Activated naive CD4-positive, alpha-beta T cell treated with anti-CD3 and anti-CD28 coated beads for 36 hours (primary cell): ENCODE measurements at regions of chr5 and their contacts with region 1.

Region 1: DNA sequence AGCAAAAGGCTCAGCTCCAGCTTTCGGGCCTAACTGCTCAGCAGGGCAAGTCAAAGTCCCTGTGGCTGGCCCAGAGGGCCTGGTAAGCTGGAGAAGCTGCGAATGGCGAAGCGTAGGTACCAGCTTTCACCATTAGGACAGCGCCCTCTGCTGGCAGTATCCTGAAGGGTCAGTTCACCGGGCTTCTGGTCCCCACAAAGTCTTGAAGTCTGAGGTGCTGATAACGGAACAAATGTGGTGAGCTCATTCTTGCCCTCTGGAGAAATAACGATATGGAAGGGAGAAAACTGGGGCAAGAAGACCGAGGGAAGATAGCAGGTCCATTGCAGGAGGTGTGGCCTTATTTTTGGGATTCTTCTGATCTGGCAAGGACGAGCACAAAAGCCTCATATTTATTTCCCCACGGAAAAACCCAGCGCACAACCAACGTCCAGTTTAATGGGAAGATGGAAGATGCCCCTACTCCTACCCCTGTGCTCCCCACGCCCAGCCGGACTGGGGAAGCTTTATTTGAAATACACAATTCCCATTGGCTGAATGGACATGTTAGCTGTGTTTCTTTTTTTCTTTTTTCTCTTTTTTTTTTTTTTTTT is 7.2 kb downstream of the SOWAHA start:
- DNase-seq: peak; percentile 97
- H3K4me3 Mint-ChIP-seq: peak overlapping the region; percentile 41
- H3K27ac Mint-ChIP-seq: no peak overlapping the region
- H3K4me1 Mint-ChIP-seq: peaks cover 12% of the 10 kb centered on the region
- H3K27me3 Mint-ChIP-seq: peaks cover 29% of the 10 kb centered on the region

Region 2: DNA sequence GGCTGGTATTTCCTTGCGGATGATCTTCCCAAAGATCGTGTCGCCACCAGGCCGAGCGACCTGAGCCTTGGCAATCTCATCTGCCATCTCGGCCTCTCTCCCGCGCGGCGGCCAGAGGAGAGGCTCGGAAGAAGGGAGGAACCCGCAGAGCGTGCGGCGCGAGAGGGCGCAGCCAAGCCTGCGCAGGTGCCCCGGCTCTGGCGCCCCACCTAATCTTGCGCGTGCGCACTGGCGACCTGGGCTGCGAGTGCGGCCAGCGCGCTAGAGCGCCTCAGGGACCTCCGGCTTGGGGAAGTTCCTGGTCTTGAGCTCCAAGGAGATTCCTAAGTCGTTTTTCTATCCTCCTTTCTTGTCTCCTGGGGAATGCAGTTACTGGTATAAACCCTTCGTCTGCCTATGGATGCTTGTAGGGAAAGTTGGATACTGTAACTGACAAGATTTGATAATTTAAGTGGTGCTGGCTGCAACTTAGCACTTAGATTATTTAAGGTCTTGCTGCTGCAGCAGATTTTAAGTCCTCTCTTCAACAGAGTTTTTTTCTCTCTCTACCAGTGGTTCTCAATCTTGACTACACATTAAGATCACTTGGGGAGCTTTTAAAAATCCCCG is 1655.0 kb before region 1 on chr5 and contains the start of gene HINT1:
- CTCF ChIA-PET with region 1: no interaction called
- intact Hi-C with region 1: no loop called
- DNase-seq: peak; percentile 93
- H3K4me3 Mint-ChIP-seq: peak within 1 kb of the TSS; percentile 96
- H3K27ac Mint-ChIP-seq: peak within 1 kb of the TSS; percentile 99
- H3K4me1 Mint-ChIP-seq: peaks cover 44% of the 10 kb centered on the region
- H3K27me3 Mint-ChIP-seq: no peaks in the 10 kb centered on the region
- total RNA-seq, gene HINT1: 372 to 379 TPM

Region 3: DNA sequence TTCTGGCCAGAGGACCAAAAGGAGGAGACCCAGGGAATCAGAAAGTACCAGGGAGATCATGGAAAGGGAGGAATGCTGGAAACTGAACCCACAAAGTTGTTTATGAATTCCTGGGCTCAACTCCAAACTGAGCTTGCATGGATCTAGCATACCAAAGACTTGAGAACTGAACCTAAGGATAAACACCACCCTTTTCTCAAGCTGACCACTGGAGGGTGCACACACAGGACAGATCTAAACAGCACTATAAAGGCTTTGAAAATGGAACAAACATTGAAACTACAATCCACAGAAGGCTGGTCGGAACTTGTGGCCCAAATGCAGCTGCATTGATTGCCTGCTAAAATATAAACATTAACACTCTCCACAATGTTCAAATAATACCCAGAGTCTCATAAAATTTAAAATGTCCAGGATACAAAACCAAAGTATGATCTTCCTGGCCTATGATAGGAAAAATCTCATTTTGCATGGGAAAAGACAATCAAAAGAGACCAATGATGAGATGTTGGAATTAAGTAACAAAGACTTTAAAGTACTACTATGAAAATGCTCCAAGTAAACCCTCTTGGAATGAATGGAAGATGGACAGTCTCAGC is 314.1 kb before region 1 on chr5:
- CTCF ChIA-PET with region 1: interaction called, 15 read pairs
- intact Hi-C with region 1: loop called (anchors 1 kb)
- DNase-seq: peak; percentile 32
- H3K4me3 Mint-ChIP-seq: no peak overlapping the region
- H3K27ac Mint-ChIP-seq: no peak overlapping the region
- H3K4me1 Mint-ChIP-seq: no peaks in the 10 kb centered on the region
- H3K27me3 Mint-ChIP-seq: peaks cover 11% of the 10 kb centered on the region

Region 4: GRCh38 chr5:132661231-132662003 is 158.8 kb before region 1 on chr5:
- CTCF ChIA-PET with region 1: interaction called, 4 read pairs
- intact Hi-C with region 1: loop called (anchors 2 kb)
- DNase-seq: no peak
- H3K4me3 Mint-ChIP-seq: no peak overlapping the region
- H3K27ac Mint-ChIP-seq: no peak overlapping the region
- H3K4me1 Mint-ChIP-seq: peaks cover 19% of the 10 kb centered on the region
- H3K27me3 Mint-ChIP-seq: peaks cover 21% of the 10 kb centered on the region

Region 5: DNA sequence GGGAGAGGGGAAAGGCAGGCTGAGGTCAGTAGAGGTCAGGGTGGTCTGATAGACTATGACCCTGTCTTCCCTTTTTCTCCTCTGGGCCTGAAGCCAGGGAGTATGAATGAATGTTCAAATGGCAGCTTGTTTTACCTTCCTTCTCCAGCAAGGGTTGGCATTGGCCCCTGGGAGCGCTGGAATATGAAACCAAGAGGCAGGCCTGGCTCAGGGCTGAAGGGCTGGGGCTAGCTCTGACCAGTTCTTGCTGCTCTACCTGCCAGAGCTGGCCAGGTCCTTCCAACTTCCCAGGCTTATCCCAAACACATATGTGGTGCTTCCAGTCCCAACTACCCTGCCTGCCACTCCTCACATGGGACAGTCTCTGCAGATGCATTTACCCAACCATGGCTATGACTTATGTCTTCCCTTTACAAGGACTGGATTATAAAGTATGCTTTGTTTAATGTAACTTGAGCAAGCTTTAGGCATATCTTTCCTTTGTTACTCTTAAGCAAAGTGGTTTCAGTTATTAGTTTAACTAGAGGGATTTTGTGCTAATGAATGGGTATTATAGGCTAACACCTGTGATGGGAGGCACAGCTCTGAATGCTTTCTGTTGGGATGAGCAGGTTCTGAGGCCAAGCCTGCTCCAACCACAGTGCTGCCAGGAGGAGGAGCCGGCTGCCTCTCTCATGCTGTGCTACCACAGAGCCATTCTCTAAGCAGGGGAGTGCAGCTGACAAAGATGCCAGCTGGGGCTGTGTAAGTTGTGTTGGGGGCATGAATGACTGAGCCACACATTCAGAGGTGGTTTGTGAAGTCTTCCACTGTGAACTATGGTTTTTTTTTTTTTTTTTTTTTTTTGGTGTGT is 66.9 kb before region 1 on chr5:
- CTCF ChIA-PET with region 1: interaction called, 34 read pairs
- intact Hi-C with region 1: loop called (anchors 1 kb)
- DNase-seq: peak; percentile 52
- H3K4me3 Mint-ChIP-seq: no peak overlapping the region
- H3K27ac Mint-ChIP-seq: no peak overlapping the region
- H3K4me1 Mint-ChIP-seq: peaks cover 35% of the 10 kb centered on the region
- H3K27me3 Mint-ChIP-seq: no peaks in the 10 kb centered on the region